ENCODE measurements at regions of chr4 and their contacts with region 1.

Region 1: GRCh38 chr4:119628308-119629141 is at the start of gene PDE5A:
- DNase-seq: no peak
- ATAC-seq: peak; percentile 95
- H3K4me3 ChIP-seq: peak within 1 kb of the TSS; percentile 75
- H3K27ac ChIP-seq: no peak within 1 kb of the TSS
- H3K4me1 ChIP-seq: peaks cover 3% of the 10 kb centered on the region
- H3K27me3 ChIP-seq: peaks cover 3 to 5% of the 10 kb centered on the region in 2 experiments; a peak in 3 of 4 replicates
- CTCF ChIP-seq: peak; percentile 63 to 80 (median 76)
- EP300 ChIP-seq: no peak
- POLR2A ChIP-seq: no peak
- RAD21 ChIP-seq: peak; percentile 67
- polyA plus RNA-seq, gene PDE5A: 0.62 to 1.6 TPM

Region 2: GRCh38 chr4:118981839-118982381 is 646.6 kb before region 1 on chr4:
- CTCF ChIA-PET with region 1: interaction called, 3 read pairs
- POLR2A ChIA-PET with region 1: no interaction called
- RAD21 ChIA-PET with region 1: interaction called, 4 read pairs
- SMC1A ChIA-PET with region 1: no interaction called
- in situ Hi-C with region 1: loop called (anchors 10 kb)
- intact Hi-C with region 1: loop called (anchors 2 kb)
- DNase-seq: no peak
- ATAC-seq: peak; percentile 94
- H3K4me3 ChIP-seq: no peak overlapping the region
- H3K27ac ChIP-seq: no peak overlapping the region
- H3K4me1 ChIP-seq: no peaks in the 10 kb centered on the region
- H3K27me3 ChIP-seq: no peaks in the 10 kb centered on the region
- CTCF ChIP-seq: peak; percentile 70 to 80 (median 79)
- EP300 ChIP-seq: no peak
- POLR2A ChIP-seq: no peak
- RAD21 ChIP-seq: peak; percentile 98

Region 3: GRCh38 chr4:119314356-119314755 is 314.2 kb before region 1 on chr4:
- CTCF ChIA-PET with region 1: interaction called, 8 read pairs
- POLR2A ChIA-PET with region 1: no interaction called
- RAD21 ChIA-PET with region 1: no interaction called
- SMC1A ChIA-PET with region 1: no interaction called
- in situ Hi-C with region 1: loop called (anchors 10 kb)
- intact Hi-C with region 1: loop called (anchors 2 kb)
- DNase-seq: no peak
- ATAC-seq: peak; percentile 81
- H3K4me3 ChIP-seq: no peak overlapping the region
- H3K27ac ChIP-seq: no peak overlapping the region
- H3K4me1 ChIP-seq: no peaks in the 10 kb centered on the region
- H3K27me3 ChIP-seq: no peaks in the 10 kb centered on the region; a peak in 1 of 4 replicates
- CTCF ChIP-seq: peak; percentile 41 to 56 (median 43); a peak in 5 of 6 replicates
- EP300 ChIP-seq: no peak
- POLR2A ChIP-seq: no peak
- RAD21 ChIP-seq: peak; percentile 77

Region 4: DNA sequence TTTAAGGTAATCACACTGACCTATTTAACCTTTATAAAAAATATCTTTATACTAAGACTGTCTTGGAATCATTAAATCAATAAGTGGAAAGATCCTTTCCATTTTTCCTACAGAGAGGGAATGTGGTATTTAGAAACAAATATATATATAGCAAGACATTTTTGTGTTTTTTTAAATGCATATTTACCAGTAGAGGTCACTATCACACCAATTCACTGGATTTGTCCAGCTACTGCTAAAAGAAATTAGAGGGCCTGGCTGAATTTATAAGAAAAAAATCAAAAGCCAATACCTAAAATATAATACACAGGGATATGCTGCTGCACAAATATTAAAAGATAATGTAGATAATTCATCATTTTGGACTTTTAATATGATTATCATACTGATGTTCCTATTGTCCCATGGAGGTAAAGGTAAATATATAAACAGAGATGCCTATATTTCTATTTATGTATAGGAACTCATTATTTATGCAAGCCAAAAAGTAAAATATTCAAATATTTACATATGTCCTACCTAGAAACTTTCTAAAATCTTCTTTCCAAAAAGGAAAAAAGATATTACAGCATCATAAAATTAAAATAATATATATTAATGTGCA is 69.4 kb before region 1 on chr4:
- CTCF ChIA-PET with region 1: interaction called, 24 read pairs
- POLR2A ChIA-PET with region 1: no interaction called
- RAD21 ChIA-PET with region 1: interaction called, 10 read pairs
- SMC1A ChIA-PET with region 1: interaction called, 4 read pairs
- in situ Hi-C with region 1: no loop called
- intact Hi-C with region 1: loop called (anchors 1 kb)
- DNase-seq: no peak
- ATAC-seq: 0 out of 3 replicates have a peak, but pooled peaks have one; percentile 34
- H3K4me3 ChIP-seq: no peak overlapping the region
- H3K27ac ChIP-seq: no peak overlapping the region
- H3K4me1 ChIP-seq: no peaks in the 10 kb centered on the region
- H3K27me3 ChIP-seq: no peaks in the 10 kb centered on the region
- CTCF ChIP-seq: peak; percentile 7 to 34 (median 22); a peak in 2 of 6 replicates
- EP300 ChIP-seq: no peak
- POLR2A ChIP-seq: no peak
- RAD21 ChIP-seq: peak; percentile 58

Region 5: GRCh38 chr4:119785963-119786362 is 157.4 kb after region 1 on chr4:
- CTCF ChIA-PET with region 1: interaction called, 10 read pairs
- POLR2A ChIA-PET with region 1: no interaction called
- RAD21 ChIA-PET with region 1: interaction called, 16 read pairs
- SMC1A ChIA-PET with region 1: interaction called, 6 read pairs
- in situ Hi-C with region 1: no loop called
- intact Hi-C with region 1: loop called (anchors 1 kb)
- DNase-seq: no peak
- ATAC-seq: no peak
- H3K4me3 ChIP-seq: no peak overlapping the region
- H3K27ac ChIP-seq: no peak overlapping the region
- H3K4me1 ChIP-seq: no peaks in the 10 kb centered on the region
- H3K27me3 ChIP-seq: no peaks in the 10 kb centered on the region
- CTCF ChIP-seq: peak in 2 of 3 experiments; percentile 15 to 30; a peak in 2 of 6 replicates
- EP300 ChIP-seq: no peak
- POLR2A ChIP-seq: no peak
- RAD21 ChIP-seq: peak; percentile 37

Region 6: GRCh38 chr4:120056246-120056645 is 427.7 kb after region 1 on chr4:
- CTCF ChIA-PET with region 1: interaction called, 32 read pairs
- POLR2A ChIA-PET with region 1: interaction called, 3 read pairs
- RAD21 ChIA-PET with region 1: interaction called, 31 read pairs
- SMC1A ChIA-PET with region 1: interaction called, 12 read pairs
- in situ Hi-C with region 1: loop called (anchors 5 kb)
- intact Hi-C with region 1: no loop called
- DNase-seq: no peak
- ATAC-seq: peak; percentile 60
- H3K4me3 ChIP-seq: no peak overlapping the region
- H3K27ac ChIP-seq: no peak overlapping the region
- H3K4me1 ChIP-seq: peaks cover 16% of the 10 kb centered on the region
- H3K27me3 ChIP-seq: no peaks in the 10 kb centered on the region
- CTCF ChIP-seq: peak in 1 of 3 experiments; percentile 5; a peak in 2 of 6 replicates
- EP300 ChIP-seq: no peak
- POLR2A ChIP-seq: no peak
- RAD21 ChIP-seq: no peak

Measured in GM12878 (cell line).